CD4-positive, alpha-beta T cell (primary cell): ENCODE measurements at regions of chr22 and their contacts with region 1.

Region 1: DNA sequence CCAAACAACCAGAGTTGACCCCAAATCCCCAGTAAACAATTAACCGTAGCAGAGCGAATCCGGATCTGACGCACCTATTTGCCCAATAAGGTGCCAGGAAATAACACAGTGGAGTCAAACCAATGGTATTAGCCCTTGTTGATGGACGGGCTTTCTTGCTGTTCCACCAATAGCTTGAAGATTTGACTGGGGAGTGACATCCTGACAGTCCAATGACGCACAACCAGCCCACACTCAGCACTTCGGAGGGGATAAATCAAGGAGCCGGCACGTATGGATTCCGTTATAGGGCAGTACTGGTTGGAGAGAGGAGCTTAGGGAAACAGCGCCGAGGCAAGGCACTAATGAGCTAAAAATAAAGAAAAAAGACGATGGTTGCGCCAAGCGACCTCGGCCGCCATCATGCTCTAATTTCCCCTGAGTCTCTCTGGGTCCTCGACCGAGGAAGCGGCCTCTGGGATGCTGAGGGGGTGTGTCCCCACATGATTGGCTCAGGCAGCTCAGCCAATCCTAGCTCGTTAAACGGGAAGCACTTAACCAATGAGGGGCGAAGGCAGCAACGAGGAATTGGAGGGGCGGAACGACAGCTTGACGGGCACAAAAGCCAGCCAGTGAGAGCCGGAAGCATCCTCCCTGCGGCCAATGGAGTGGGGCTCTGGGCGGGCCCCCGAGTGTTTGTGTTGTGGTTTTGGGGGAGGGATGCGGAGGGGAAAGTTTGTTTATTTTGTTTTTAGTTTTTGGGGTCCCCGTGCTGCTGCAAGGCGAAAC is 49.5 kb downstream of the FAM83F start:
- DNase-seq: peak; percentile 96 to 100 (median 98)
- ATAC-seq: peak; percentile 86
- H3K4me3 ChIP-seq: peak overlapping the region; percentile 67
- H3K4me3 Mint-ChIP-seq: peak overlapping the region; percentile 97
- H3K27ac ChIP-seq: peak overlapping the region; percentile 97 to 100
- H3K27ac Mint-ChIP-seq: peak overlapping the region; percentile 98
- H3K4me1 ChIP-seq: peaks cover 43% of the 10 kb centered on the region
- H3K4me1 Mint-ChIP-seq: peaks cover 45% of the 10 kb centered on the region
- H3K27me3 ChIP-seq: peaks cover 0 to 4% of the 10 kb centered on the region in 2 experiments
- H3K27me3 Mint-ChIP-seq: peaks cover 7% of the 10 kb centered on the region
- CTCF ChIP-seq: no peak

Region 2: GRCh38 chr22:39152511-39153219 is 891.6 kb before region 1 on chr22 and contains the start of gene CBX7:
- CTCF ChIA-PET with region 1: no interaction called
- POLR2A ChIA-PET with region 1: interaction called, 9 read pairs
- intact Hi-C with region 1: loop called in 1 of 2 experiments (anchors 10 kb)
- DNase-seq: peak; percentile 84 to 98 (median 94)
- ATAC-seq: peak; percentile 83
- H3K4me3 ChIP-seq: peak within 1 kb of the TSS; percentile 94
- H3K4me3 Mint-ChIP-seq: peak within 1 kb of the TSS; percentile 94
- H3K27ac ChIP-seq: peak within 1 kb of the TSS; percentile 83 to 86
- H3K27ac Mint-ChIP-seq: peak within 1 kb of the TSS; percentile 100
- H3K4me1 ChIP-seq: peaks cover 54% of the 10 kb centered on the region
- H3K4me1 Mint-ChIP-seq: peaks cover 39% of the 10 kb centered on the region
- H3K27me3 ChIP-seq: no peaks in the 10 kb centered on the region
- H3K27me3 Mint-ChIP-seq: no peaks in the 10 kb centered on the region
- CTCF ChIP-seq: no peak
- total RNA-seq, gene CBX7: 48.6 to 49.1 TPM

Region 3: DNA sequence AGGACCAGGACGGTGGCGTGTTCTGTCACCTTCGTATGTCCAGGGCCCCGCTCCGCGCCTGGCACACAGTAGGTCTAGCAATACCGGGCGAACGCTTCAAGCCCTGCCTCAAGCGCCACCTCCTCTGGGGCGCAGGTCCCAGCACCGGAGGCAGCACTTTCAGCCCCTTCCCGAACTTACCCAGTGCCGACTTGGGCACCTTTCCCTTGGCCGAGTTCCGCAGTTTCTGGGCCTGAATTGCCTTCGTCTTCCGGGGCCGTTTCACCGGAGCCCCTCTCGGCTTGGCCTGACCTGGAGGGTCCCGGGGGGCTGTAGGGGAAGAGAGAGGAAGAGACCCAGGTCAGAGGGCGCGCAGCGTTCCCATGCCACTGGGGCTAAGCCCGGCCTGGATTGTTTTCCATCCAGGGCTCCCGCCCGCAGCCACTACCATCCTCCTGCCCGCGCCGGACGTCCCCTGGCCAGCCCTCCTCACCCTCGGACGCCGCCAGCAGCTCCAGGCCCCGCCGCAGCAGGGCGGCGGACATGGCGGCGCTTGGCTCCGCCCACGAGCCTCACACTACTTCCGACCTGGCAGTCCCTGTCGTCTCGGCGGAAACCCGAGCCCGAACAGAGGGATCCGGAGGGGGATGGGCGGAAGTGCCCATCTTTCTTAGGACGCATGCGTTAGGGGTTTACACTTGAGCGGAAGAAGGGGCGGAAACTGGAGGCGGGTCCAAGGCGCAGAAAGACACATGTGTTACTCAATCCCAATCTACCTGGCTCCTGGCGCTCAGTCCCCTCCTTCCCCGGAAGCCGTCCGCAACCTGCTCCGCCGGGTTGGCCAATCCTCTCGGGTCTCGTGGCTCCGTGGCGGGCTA is 511.8 kb before region 1 on chr22 and contains the start of gene RPS19BP1:
- CTCF ChIA-PET with region 1: interaction called, 6 read pairs
- POLR2A ChIA-PET with region 1: interaction called, 35 read pairs
- intact Hi-C with region 1: no loop called
- DNase-seq: peak; percentile 98 to 100 (median 99)
- ATAC-seq: peak; percentile 85
- H3K4me3 ChIP-seq: peak within 1 kb of the TSS; percentile 73
- H3K4me3 Mint-ChIP-seq: peak within 1 kb of the TSS; percentile 98
- H3K27ac ChIP-seq: peak within 1 kb of the TSS; percentile 74 to 91
- H3K27ac Mint-ChIP-seq: peak within 1 kb of the TSS; percentile 90
- H3K4me1 ChIP-seq: peaks cover 67% of the 10 kb centered on the region
- H3K4me1 Mint-ChIP-seq: peaks cover 64% of the 10 kb centered on the region
- H3K27me3 ChIP-seq: no peaks in the 10 kb centered on the region
- H3K27me3 Mint-ChIP-seq: no peaks in the 10 kb centered on the region
- CTCF ChIP-seq: no peak
- total RNA-seq, gene RPS19BP1: 65.8 to 69.7 TPM

Region 4: DNA sequence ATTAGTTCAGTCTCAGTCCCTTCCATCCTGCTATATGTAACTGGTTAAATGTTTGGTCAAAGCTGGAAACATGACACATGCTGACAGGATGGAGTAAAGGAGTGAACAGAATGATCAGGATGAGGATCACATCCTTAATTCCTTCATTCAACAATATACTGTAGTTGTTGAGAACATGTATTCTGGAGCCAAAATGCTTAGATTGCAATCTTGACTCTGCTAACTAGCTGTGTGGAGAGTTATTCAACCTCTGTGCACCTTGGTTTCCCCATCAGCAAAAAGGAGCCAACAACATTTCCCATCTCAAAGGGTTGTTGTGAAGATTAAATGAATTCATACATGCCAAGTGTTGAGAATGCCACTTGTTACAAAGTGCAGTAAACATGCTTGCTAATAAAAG is 163.6 kb before region 1 on chr22:
- CTCF ChIA-PET with region 1: no interaction called
- POLR2A ChIA-PET with region 1: no interaction called
- intact Hi-C with region 1: no loop called
- DNase-seq: no peak
- ATAC-seq: no peak
- H3K4me3 ChIP-seq: no peak overlapping the region
- H3K4me3 Mint-ChIP-seq: no peak overlapping the region
- H3K27ac ChIP-seq: no peak overlapping the region
- H3K27ac Mint-ChIP-seq: no peak overlapping the region
- H3K4me1 ChIP-seq: no peaks in the 10 kb centered on the region
- H3K4me1 Mint-ChIP-seq: no peaks in the 10 kb centered on the region
- H3K27me3 ChIP-seq: no peaks in the 10 kb centered on the region
- H3K27me3 Mint-ChIP-seq: no peaks in the 10 kb centered on the region
- CTCF ChIP-seq: no peak

Region 5: DNA sequence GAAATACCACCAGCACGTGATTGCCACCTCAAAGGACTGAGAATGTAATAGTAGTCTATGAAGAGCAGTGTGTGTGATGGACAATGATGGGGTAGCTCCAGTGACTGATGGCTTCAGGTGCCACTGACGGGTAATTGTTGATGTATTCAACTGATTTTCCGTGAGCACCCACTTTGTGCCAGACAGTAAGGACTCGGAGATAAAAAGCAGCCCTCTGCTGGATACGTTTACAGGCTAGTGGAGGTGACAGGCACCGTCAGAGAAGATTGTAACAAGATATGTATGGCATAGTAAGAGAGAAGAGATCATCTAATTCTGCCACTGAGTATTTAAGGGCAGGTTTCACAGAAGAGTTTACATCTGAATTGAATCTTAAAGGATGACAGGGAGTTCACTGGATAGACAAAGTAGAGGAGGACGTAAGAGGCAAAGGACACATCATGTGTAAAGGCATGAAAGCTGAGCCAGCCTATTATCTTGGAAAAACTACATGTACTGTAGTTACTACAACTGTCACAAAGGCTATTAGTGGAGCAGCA is 149.7 kb before region 1 on chr22:
- CTCF ChIA-PET with region 1: no interaction called
- POLR2A ChIA-PET with region 1: no interaction called
- intact Hi-C with region 1: no loop called
- DNase-seq: no peak
- ATAC-seq: peak; percentile 51
- H3K4me3 ChIP-seq: no peak overlapping the region
- H3K4me3 Mint-ChIP-seq: no peak overlapping the region
- H3K27ac ChIP-seq: no peak overlapping the region
- H3K27ac Mint-ChIP-seq: no peak overlapping the region
- H3K4me1 ChIP-seq: peaks cover 17% of the 10 kb centered on the region
- H3K4me1 Mint-ChIP-seq: peaks cover 21% of the 10 kb centered on the region
- H3K27me3 ChIP-seq: no peaks in the 10 kb centered on the region
- H3K27me3 Mint-ChIP-seq: no peaks in the 10 kb centered on the region
- CTCF ChIP-seq: no peak

Region 6: GRCh38 chr22:39994566-39995392 is 49.5 kb before region 1 on chr22 and contains the start of gene FAM83F:
- CTCF ChIA-PET with region 1: no interaction called
- POLR2A ChIA-PET with region 1: interaction called, 29 read pairs
- intact Hi-C with region 1: no loop called
- DNase-seq: peak in 10 of 14 experiments; percentile 6 to 68 (median 40)
- ATAC-seq: peak; percentile 18
- H3K4me3 ChIP-seq: peak within 1 kb of the TSS; percentile 29
- H3K4me3 Mint-ChIP-seq: peak within 1 kb of the TSS; percentile 81
- H3K27ac ChIP-seq: no peak within 1 kb of the TSS
- H3K27ac Mint-ChIP-seq: peak within 1 kb of the TSS; percentile 81
- H3K4me1 ChIP-seq: peaks cover 20% of the 10 kb centered on the region
- H3K4me1 Mint-ChIP-seq: peaks cover 18% of the 10 kb centered on the region
- H3K27me3 ChIP-seq: peaks cover 13 to 17% of the 10 kb centered on the region in 2 experiments
- H3K27me3 Mint-ChIP-seq: peaks cover 27% of the 10 kb centered on the region
- CTCF ChIP-seq: no peak
- total RNA-seq, gene FAM83F: 5.2 to 6.8 TPM

Region 7: DNA sequence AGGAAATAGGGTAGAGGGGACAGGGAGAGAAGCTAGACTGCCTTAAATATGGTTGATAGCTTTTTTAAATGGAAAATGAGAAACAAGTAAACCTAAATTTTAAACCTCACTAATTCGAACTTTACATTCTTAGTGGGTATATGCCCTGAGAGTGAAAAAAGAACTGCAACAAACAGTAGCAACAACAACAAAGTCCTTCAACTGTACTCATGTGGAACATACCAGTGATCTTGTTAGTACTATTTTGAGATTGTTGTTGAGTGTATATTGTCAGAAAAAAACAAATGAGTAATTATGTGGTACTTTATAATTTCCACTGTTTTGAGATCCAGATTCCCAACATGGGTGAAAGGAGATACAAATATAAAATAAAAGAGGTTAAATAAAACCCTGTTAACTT is 44.5 kb after region 1 on chr22:
- CTCF ChIA-PET with region 1: no interaction called
- POLR2A ChIA-PET with region 1: interaction called, 15 read pairs
- intact Hi-C with region 1: no loop called
- DNase-seq: no peak
- ATAC-seq: no peak
- H3K4me3 ChIP-seq: no peak overlapping the region
- H3K4me3 Mint-ChIP-seq: no peak overlapping the region
- H3K27ac ChIP-seq: no peak overlapping the region
- H3K27ac Mint-ChIP-seq: no peak overlapping the region
- H3K4me1 ChIP-seq: peaks cover 26% of the 10 kb centered on the region
- H3K4me1 Mint-ChIP-seq: peaks cover 55% of the 10 kb centered on the region
- H3K27me3 ChIP-seq: no peaks in the 10 kb centered on the region
- H3K27me3 Mint-ChIP-seq: no peaks in the 10 kb centered on the region
- CTCF ChIP-seq: no peak

Region 8: DNA sequence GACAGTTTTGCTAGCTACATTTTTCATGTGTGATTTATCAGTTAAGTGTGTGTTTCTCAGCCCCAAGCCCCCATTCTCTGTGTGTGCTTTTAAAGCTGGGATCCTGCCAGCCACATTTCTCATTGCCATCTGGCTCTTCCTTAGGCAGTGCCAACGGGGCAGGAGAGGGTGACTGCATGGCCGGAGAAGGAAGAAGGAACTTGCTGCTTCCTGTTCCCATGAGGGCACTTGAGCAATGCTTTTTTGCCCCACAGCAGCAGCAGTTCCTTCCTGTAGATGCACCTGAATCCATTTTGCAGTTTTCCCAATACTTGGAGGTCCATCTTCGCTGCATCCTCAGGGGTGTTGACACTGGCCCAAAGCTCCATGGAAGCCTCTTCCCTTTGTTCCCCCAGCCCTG is 171.0 kb after region 1 on chr22:
- CTCF ChIA-PET with region 1: no interaction called
- POLR2A ChIA-PET with region 1: interaction called, 12 read pairs
- intact Hi-C with region 1: no loop called
- DNase-seq: peak in 3 of 14 experiments; percentile 36 to 50 (median 49)
- ATAC-seq: no peak
- H3K4me3 ChIP-seq: no peak overlapping the region
- H3K4me3 Mint-ChIP-seq: peak overlapping the region; percentile 71
- H3K27ac ChIP-seq: peak overlapping the region; percentile 50 to 59
- H3K27ac Mint-ChIP-seq: peak overlapping the region; percentile 91
- H3K4me1 ChIP-seq: peaks cover 88% of the 10 kb centered on the region
- H3K4me1 Mint-ChIP-seq: peaks cover 90% of the 10 kb centered on the region
- H3K27me3 ChIP-seq: no peaks in the 10 kb centered on the region
- H3K27me3 Mint-ChIP-seq: no peaks in the 10 kb centered on the region
- CTCF ChIP-seq: no peak

Region 9: DNA sequence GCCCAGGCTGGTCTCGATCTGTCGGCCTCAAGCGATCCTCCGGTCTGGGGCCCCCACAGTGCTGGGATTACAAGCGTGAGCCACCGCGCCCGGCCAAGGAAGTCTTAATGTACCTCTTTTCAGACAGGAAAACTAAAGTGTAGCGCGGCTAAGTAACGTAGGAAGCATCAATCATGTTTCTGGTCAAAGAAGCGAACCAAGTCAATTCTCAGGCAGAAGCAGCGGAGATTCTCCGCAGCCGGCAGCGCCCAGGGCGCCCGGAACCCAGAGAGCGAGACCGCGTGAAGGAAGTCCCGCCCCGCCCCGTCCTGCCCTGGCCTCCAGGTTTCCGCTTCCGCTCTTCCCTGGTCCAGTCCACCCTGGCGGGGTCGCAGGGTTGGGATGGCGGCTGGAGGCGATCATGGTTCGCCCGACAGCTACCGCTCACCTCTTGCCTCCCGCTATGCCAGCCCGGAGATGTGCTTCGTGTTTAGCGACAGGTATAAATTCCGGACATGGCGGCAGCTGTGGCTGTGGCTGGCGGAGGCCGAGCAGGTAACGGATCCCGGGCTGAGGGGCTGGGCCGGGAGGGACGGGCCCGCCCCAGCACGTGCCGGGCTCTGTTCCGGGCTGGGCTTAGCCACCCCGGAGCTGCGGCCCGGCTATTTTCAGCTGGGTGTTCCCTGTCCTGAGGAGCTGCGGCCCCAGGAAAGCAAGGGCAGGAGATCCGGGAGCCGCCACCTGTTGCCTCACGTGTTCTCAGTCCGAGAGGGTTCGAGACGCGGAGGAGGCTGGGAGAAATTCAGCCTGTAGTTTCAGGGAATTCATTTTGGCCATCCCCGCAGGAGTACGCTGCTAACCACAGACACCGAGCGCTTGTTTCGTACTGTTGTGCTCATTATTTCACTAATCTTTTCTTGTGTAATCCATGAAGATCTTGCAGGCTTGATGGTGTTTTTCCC is 302.2 kb after region 1 on chr22 and contains the start of gene ADSL:
- CTCF ChIA-PET with region 1: interaction called, 9 read pairs
- POLR2A ChIA-PET with region 1: interaction called, 105 read pairs
- intact Hi-C with region 1: loop called (anchors 2 kb)
- DNase-seq: peak; percentile 72 to 91 (median 80)
- ATAC-seq: peak; percentile 74
- H3K4me3 ChIP-seq: peak within 1 kb of the TSS; percentile 91
- H3K4me3 Mint-ChIP-seq: peak within 1 kb of the TSS; percentile 96
- H3K27ac ChIP-seq: peak within 1 kb of the TSS; percentile 81 to 89
- H3K27ac Mint-ChIP-seq: peak within 1 kb of the TSS; percentile 98
- H3K4me1 ChIP-seq: peaks cover 65% of the 10 kb centered on the region
- H3K4me1 Mint-ChIP-seq: peaks cover 52% of the 10 kb centered on the region
- H3K27me3 ChIP-seq: no peaks in the 10 kb centered on the region
- H3K27me3 Mint-ChIP-seq: no peaks in the 10 kb centered on the region
- CTCF ChIP-seq: no peak
- total RNA-seq, gene ADSL: 62.9 to 75.3 TPM

Region 10: GRCh38 chr22:40363059-40363458 is 318.8 kb after region 1 on chr22:
- CTCF ChIA-PET with region 1: no interaction called
- POLR2A ChIA-PET with region 1: no interaction called
- intact Hi-C with region 1: no loop called
- DNase-seq: no peak
- ATAC-seq: no peak
- H3K4me3 ChIP-seq: no peak overlapping the region
- H3K4me3 Mint-ChIP-seq: no peak overlapping the region
- H3K27ac ChIP-seq: no peak overlapping the region
- H3K27ac Mint-ChIP-seq: peak overlapping the region; percentile 65
- H3K4me1 ChIP-seq: no peaks in the 10 kb centered on the region
- H3K4me1 Mint-ChIP-seq: no peaks in the 10 kb centered on the region
- H3K27me3 ChIP-seq: no peaks in the 10 kb centered on the region
- H3K27me3 Mint-ChIP-seq: no peaks in the 10 kb centered on the region
- CTCF ChIP-seq: no peak

Region 11: DNA sequence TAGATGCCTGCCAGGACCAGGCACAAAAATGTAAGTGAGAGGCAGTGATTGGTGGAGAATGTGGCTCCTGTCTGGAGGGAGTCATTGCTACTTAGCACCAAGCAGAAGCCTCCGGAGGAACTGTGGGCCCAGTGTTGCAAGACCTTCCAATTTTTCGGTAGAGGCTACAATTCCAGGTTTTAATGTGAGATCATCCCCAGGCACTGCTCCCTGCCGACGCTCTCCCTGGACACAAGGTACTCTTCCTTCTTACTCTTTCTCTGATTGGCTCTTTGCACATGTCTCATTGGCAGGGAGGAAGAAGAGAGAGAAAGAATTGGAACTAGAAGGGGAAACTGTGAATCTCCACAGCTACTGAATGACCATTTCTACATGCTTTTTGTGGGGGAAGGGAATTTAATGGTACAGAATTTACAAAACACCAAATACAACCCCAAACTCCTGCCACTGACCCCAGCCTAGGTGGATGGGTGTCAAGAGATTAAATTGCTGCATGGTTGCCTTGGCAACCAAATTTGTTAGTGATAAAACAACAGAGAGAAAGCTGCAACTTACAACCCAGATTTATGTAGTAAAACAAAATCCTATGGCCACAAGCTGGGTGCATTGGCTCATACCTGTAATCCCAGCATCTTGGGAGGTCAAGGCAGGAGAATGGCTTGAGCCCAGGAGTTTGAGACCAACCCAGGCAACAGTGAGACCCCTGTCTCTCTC is 994.6 kb after region 1 on chr22:
- CTCF ChIA-PET with region 1: no interaction called
- POLR2A ChIA-PET with region 1: no interaction called
- intact Hi-C with region 1: no loop called
- DNase-seq: no peak
- ATAC-seq: no peak
- H3K4me3 ChIP-seq: no peak overlapping the region
- H3K4me3 Mint-ChIP-seq: no peak overlapping the region
- H3K27ac ChIP-seq: no peak overlapping the region
- H3K27ac Mint-ChIP-seq: no peak overlapping the region
- H3K4me1 ChIP-seq: no peaks in the 10 kb centered on the region
- H3K4me1 Mint-ChIP-seq: no peaks in the 10 kb centered on the region
- H3K27me3 ChIP-seq: no peaks in the 10 kb centered on the region
- H3K27me3 Mint-ChIP-seq: no peaks in the 10 kb centered on the region
- CTCF ChIP-seq: no peak